ENCODE measurements at regions of chr1 and their contacts with region 1.

Region 1: DNA sequence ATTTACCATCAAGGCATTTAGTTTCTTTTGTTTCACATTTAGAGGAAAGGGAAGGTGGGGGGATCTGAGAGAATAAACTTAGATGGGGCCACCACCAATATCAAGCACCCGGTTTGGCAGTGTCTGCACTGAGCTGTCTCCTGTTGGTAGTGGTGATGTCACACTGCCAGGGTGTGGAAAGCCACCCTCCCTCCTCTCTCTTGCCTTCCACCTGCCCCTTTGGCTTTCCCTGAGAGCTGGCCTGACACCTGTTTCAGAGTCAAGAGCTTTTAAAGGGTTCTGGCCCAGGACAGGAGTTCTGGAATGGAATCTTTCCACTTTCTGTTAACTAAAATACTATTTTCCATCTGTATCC is 13.4 kb downstream of the ATF3 start:
- DNase-seq: no peak
- ATAC-seq: peak in 2 of 4 donors; percentile 20 to 44
- H3K4me3 ChIP-seq: no peak overlapping the region
- H3K27ac ChIP-seq: no peak overlapping the region
- H3K4me1 ChIP-seq: no peaks in the 10 kb centered on the region
- H3K27me3 ChIP-seq: no peaks in the 10 kb centered on the region
- CTCF ChIP-seq: no peak

Region 2: GRCh38 chr1:212477014-212477679 is 144.8 kb before region 1 on chr1:
- intact Hi-C with region 1: loop called (anchors 5 to 10 kb)
- DNase-seq: peak; percentile 68 to 87 (median 78)
- ATAC-seq: peak; percentile 93 to 99 (median 98)
- H3K4me3 ChIP-seq: no peak overlapping the region
- H3K27ac ChIP-seq: no peak overlapping the region
- H3K4me1 ChIP-seq: no peaks in the 10 kb centered on the region
- H3K27me3 ChIP-seq: no peaks in the 10 kb centered on the region
- CTCF ChIP-seq: peak; percentile 73 to 89 (median 78)

Region 3: DNA sequence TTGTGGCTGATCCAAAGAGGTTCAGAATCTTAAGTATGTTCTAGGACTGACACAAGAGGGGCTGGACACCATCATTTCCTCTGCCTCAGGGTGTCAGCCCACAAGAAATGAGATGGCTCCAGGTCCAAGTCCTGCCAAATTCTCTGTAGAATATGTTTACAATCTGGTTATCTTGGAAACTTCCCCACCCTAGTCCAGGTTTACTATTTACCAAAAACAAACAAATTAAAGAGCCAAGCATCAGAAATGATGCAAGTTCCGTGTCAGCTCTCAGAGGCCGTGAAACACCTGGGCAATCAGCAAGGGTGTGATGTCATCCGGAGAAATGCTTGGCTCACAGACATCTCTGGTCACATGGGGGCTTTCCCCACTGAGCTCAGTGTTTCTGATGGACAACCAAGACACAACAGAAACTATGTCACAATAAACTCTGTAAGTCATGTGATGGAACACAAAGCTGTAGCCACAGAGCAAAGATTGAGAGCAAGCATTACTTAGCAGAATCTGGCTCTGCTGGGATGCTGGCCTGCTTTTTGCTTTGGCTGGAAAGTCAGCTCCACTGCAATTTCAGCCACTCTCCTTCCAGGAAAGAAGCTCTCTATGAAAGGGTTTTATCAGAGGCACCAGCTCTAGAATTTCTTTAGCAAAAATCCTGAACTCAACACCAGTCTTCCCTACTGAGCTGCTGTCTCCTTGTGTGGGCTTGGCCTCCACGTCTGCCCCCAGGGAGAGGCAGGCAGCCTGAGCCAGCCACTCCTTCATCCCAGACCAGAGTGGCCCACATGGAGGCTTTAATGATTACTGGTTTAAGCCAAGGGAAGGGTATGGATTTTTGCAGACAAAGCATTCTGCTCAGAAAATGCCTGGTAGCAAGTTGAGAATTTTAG is 133.3 kb before region 1 on chr1:
- intact Hi-C with region 1: loop called in 1 of 3 experiments (anchors 10 kb)
- DNase-seq: peak in 4 of 6 donors; percentile 47 to 80 (median 66)
- ATAC-seq: peak; percentile 74 to 79 (median 78)
- H3K4me3 ChIP-seq: no peak overlapping the region
- H3K27ac ChIP-seq: peak overlapping the region in 2 of 4 donors; percentile 54 to 67
- H3K4me1 ChIP-seq: peaks cover 0 to 12% (median 0%) of the 10 kb centered on the region in 3 donors
- H3K27me3 ChIP-seq: no peaks in the 10 kb centered on the region
- CTCF ChIP-seq: no peak

Region 4: DNA sequence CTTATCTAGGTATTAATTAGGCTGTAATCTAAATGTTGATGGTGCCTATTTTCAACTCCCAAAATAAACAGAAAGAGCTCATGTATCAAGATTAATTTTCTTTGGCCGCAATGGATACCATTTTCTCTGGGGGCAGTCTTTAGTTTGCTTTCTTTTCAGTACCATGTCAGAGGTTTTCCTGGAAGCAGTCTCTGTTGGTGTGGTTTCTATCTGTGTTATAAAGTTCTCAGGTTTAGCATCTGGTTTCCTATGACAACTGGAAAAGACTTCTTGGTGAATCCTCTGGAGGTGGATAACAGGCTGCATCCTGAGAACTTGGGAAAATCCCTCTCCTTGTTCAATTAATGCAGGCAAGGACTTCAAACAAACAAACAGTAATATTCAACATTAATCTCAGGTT is 116.4 kb after region 1 on chr1:
- intact Hi-C with region 1: no loop called
- DNase-seq: no peak
- ATAC-seq: no peak
- H3K4me3 ChIP-seq: no peak overlapping the region
- H3K27ac ChIP-seq: no peak overlapping the region
- H3K4me1 ChIP-seq: no peaks in the 10 kb centered on the region
- H3K27me3 ChIP-seq: no peaks in the 10 kb centered on the region
- CTCF ChIP-seq: no peak

Measured in pancreas (tissue), 10 donors.